ENCODE measurements at regions of chr11 and their contacts with region 1.

Region 1: DNA sequence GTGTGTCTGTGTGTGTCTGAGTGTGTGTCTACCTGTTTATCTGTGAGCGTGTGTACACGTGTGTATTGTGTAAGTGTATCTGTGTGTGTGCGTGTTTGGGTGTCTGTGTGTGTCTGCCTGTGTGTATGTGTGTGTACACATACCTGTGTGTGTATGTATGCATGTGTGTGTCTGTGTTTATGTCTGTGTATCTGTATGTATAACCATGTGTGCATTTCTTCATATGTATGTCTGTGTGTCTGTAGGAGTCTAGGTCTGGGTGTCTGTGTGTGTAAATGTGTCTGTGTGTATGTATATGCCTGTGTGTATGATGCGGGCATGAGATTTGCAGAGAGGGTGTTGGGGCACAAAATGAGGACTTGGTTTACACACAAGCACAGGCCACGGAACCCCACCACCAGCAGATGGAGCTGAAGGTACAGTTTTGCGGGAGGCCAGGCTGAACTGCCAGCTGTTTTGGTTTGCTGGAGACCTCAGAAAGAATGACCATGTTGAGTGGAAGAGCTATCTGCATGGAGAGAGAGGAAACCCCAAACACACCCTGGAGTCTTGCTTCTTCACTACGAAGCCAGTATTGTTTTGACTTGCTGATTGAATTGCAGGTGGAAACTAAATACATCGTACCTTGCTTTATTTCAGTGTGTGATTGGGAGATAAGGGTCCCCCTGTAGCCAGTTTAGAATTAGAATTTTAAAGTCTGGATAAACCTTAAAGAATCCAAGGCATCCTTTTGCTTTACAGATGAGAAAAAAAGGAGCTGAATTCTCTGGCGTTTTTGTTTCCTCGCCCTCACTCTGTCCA is 497.2 kb downstream of the NTM start:
- DNase-seq: peak; percentile 66 to 78 (median 72)
- ATAC-seq: peak; percentile 67
- H3K4me3 ChIP-seq: no peak overlapping the region
- H3K27ac ChIP-seq: no peak overlapping the region
- H3K4me1 ChIP-seq: no peaks in the 10 kb centered on the region
- H3K27me3 ChIP-seq: no peaks in the 10 kb centered on the region
- CTCF ChIP-seq: peak; percentile 45 to 81 (median 71)
- POLR2A ChIP-seq: no peak

Region 2: DNA sequence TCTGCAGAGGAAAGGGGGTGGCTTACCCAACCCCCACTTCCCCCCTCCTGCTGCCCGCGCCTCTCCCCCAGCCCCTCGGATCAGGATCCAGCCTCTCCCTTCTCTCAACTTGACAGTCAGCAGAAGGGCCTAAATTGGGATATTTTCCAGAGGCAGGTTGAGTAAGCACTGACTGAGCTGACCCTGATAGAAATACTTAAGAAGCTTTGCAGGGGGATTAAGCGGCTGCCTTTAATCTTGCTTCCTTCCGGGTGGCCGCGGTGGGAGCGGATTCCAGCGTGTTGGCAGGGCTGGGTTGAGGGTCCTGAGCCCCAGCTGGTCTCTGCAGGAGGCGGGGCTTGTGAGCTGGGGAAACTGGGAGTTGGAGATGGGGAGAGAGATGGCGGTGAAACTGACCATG is 52.1 kb before region 1 on chr11:
- intact Hi-C with region 1: no loop called
- DNase-seq: no peak
- ATAC-seq: no peak
- H3K4me3 ChIP-seq: no peak overlapping the region
- H3K27ac ChIP-seq: no peak overlapping the region
- H3K4me1 ChIP-seq: no peaks in the 10 kb centered on the region
- H3K27me3 ChIP-seq: no peaks in the 10 kb centered on the region
- CTCF ChIP-seq: no peak
- POLR2A ChIP-seq: no peak

Region 3: DNA sequence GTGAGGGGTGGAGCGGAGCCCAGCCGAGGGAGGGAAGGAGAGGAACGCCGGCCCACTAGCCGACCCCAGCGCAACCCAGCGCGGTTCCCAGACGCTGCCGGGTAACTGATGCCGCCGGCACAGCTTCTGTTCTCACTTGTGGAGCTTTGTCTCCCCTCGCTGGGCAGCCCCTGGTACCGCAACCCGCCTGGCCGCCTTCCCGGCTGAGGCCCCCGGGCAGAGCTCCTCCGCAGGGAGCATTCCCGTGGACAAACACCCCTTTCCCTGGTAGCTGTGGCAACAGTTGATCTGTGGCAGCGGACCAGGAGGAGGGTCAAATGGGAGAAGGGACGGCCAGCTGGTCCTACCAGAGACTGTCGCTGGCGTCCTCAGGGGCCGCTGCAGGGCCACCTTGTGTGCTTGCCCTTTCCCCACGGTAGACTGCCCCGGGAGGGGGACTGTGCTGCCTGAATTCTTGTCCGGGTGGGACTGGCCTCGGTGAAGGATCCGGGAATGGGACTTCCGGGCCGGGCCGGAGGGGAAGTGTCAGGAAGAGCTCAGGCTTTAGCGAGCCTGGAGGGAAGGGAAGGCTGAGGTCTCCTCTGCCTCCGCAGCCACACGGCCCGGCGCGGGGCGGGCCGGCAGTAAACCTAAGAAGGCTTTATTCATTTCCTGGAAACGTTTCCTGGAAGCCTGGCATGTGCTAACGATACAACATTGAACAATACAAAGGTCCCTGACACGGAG is 1196.7 kb after region 1 on chr11:
- intact Hi-C with region 1: loop called (anchors 10 kb)
- DNase-seq: peak; percentile 64 to 74 (median 70)
- ATAC-seq: peak; percentile 87
- H3K4me3 ChIP-seq: peak overlapping the region in 1 of 2 donors; percentile 11
- H3K27ac ChIP-seq: peak overlapping the region in 3 of 4 donors; percentile 9 to 50 (median 38)
- H3K4me1 ChIP-seq: peaks cover 14% of the 10 kb centered on the region
- H3K27me3 ChIP-seq: no peaks in the 10 kb centered on the region
- CTCF ChIP-seq: peak; percentile 39 to 76 (median 69)
- POLR2A ChIP-seq: peak in 2 of 3 donors; percentile 35 to 44